ENCODE measurements at regions of chr11 and their contacts with region 1.

Region 1: DNA sequence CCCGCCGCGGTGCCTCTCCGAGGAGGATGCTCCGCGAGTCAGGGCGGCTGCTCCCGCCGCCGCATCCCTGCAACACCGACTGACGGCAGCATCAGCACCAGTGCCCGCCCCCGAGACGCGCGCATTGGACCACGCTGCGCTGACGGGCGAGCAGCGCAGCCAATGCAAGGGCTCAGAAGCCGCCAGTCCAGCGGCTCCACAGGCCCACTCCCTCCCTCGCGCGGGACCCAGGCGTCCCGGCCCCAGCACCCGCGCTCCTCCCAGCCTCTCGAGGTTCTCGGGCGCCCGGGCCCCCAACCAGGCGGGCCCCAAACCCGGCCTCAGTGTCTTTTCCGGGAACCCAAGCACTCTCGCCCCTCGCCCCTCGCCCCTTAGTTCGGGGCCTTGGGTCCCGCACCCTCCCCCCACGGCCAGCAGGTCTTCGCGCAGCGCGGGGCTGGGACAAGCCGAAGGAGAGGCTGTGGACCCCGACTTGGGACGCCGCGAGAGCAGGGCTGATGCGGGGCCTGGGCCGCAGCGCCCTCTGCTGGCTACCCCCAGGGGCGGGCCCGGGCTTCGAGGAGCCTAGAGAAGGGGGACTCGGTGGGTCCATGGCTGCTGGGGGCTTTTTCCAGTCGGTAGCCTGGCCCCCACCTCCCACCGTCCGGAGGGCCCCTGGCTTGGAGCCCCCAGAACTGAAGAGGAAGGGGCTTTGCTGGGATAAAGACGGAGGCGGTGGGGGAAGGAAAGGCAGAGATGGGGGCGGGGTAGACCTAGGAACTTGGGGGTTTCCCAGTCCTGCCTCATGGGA is at the start of gene NRXN2:
- DNase-seq: peak; percentile 69 to 81 (median 79)
- H3K4me3 ChIP-seq: peak within 1 kb of the TSS; percentile 60 to 90 (median 61)
- H3K4me3 Mint-ChIP-seq: peak within 1 kb of the TSS; percentile 71 to 74
- H3K27ac ChIP-seq: peak within 1 kb of the TSS in 1 of 2 donors; percentile 65
- H3K27ac Mint-ChIP-seq: peak within 1 kb of the TSS in 2 of 7 donors; percentile 30 to 64
- H3K4me1 ChIP-seq: peaks cover 15 to 32% of the 10 kb centered on the region in 2 donors
- H3K4me1 Mint-ChIP-seq: peaks cover 24% of the 10 kb centered on the region
- H3K27me3 ChIP-seq: peaks cover 5 to 22% of the 10 kb centered on the region in 2 donors
- H3K27me3 Mint-ChIP-seq: peaks cover 20 to 32% (median 20%) of the 10 kb centered on the region in 3 donors
- CTCF ChIP-seq: peak; percentile 100
- polyA plus RNA-seq, gene NRXN2: 0.07 TPM in 1 of 3 donors, not detected in the others

Region 2: DNA sequence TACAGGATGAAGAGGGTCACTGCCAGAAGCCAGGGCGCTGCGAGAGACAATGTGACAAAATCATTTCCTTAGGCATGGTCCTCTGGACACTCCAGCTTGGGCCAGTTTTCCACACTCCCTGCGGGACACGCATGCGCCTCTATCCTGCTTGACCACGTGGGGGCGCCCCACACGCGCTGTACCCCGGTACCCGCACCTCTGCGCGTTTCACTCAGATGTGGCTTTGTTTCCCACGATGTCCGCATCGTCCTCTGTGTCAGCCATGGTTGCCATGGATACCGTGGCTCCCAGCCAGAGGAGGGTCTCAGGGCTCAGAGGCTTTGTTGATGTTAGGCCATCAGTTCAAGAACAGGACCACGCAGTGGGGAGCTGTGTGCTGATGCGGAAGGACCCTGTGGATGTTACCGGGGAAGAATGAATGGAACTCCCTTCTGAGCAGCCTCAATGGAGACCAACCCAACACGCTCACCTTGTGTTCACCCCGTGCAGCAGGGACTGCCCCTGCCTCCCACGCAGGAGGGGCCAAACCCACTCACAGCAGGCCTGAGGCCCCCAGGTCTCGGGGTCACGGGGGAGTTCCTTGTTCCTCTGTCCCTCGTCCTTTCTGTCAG is 233.4 kb before region 1 on chr11:
- intact Hi-C with region 1: loop called in 1 of 2 experiments (anchors 5 kb)
- DNase-seq: peak; percentile 59 to 73 (median 69)
- H3K4me3 ChIP-seq: no peak overlapping the region
- H3K4me3 Mint-ChIP-seq: peak overlapping the region in 1 of 2 donors; percentile 24
- H3K27ac ChIP-seq: no peak overlapping the region
- H3K27ac Mint-ChIP-seq: peak overlapping the region in 1 of 7 donors; percentile 60
- H3K4me1 ChIP-seq: peaks cover 28 to 35% of the 10 kb centered on the region in 2 donors
- H3K4me1 Mint-ChIP-seq: peaks cover 24% of the 10 kb centered on the region
- H3K27me3 ChIP-seq: no peaks in the 10 kb centered on the region
- H3K27me3 Mint-ChIP-seq: peaks cover 0 to 5% (median under 1%) of the 10 kb centered on the region in 3 donors
- CTCF ChIP-seq: peak; percentile 94

Region 3: GRCh38 chr11:64553551-64554201 is 169.6 kb before region 1 on chr11:
- intact Hi-C with region 1: loop called in 1 of 2 experiments (anchors 2 kb)
- DNase-seq: peak; percentile 32 to 63 (median 55)
- H3K4me3 ChIP-seq: no peak overlapping the region
- H3K4me3 Mint-ChIP-seq: peak overlapping the region in 1 of 2 donors; percentile 35
- H3K27ac ChIP-seq: no peak overlapping the region
- H3K27ac Mint-ChIP-seq: peak overlapping the region in 1 of 7 donors; percentile 11
- H3K4me1 ChIP-seq: peaks cover 6 to 9% of the 10 kb centered on the region in 2 donors
- H3K4me1 Mint-ChIP-seq: peaks cover 14% of the 10 kb centered on the region
- H3K27me3 ChIP-seq: no peaks in the 10 kb centered on the region
- H3K27me3 Mint-ChIP-seq: peaks cover 2 to 10% (median 4%) of the 10 kb centered on the region in 3 donors
- CTCF ChIP-seq: peak; percentile 99